Heart left ventricle (tissue), 16 donors: ENCODE measurements at regions of chr20 and their contacts with region 1.

Region 1: GRCh38 chr20:47620808-47621805 is 119.4 kb downstream of the NCOA3 start:
- DNase-seq: no peak
- ATAC-seq: peak in 2 of 4 donors; percentile 53 to 60
- H3K4me3 ChIP-seq: no peak overlapping the region
- H3K27ac ChIP-seq: peak overlapping the region in 5 of 12 donors; percentile 3 to 18 (median 8)
- H3K4me1 ChIP-seq: peaks cover 0 to 24% (median 11%) of the 10 kb centered on the region in 12 donors
- H3K27me3 ChIP-seq: no peaks in the 10 kb centered on the region
- CTCF ChIP-seq: peak; percentile 74 to 96 (median 87)
- POLR2A ChIP-seq: no peak

Region 2: DNA sequence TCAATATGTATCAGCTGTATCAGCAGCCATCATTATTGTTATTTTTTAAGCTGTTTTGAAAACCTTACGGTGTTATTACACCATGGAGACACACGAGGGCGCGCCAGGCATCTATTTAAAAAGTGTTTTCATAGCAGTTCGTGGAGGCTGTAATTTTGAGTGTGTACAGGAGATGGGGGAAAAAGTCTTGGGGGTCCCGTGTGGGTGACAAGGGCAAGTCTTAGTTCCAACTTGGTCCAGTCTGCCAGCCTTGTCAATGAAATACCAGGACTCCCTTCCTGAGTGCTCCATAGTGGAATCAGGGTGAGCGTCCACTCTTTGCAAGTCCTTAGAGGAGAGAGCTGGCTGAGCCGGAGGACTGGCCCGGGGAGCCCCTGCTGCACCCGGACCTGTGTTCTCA is 868.4 kb before region 1 on chr20:
- intact Hi-C with region 1: loop called in 6 of 10 experiments (anchors 5 to 10 kb)
- DNase-seq: peak in 3 of 5 donors; percentile 17 to 44 (median 34)
- ATAC-seq: peak in 1 of 4 donors; percentile 45
- H3K4me3 ChIP-seq: peak overlapping the region in 2 of 12 donors; percentile 18 to 20
- H3K27ac ChIP-seq: no peak overlapping the region
- H3K4me1 ChIP-seq: peaks cover 0 to 4% (median 0%) of the 10 kb centered on the region in 12 donors
- H3K27me3 ChIP-seq: peaks cover 0 to 10% (median 0%) of the 10 kb centered on the region in 9 donors
- CTCF ChIP-seq: peak; percentile 59 to 83 (median 71)
- POLR2A ChIP-seq: no peak

Region 3: DNA sequence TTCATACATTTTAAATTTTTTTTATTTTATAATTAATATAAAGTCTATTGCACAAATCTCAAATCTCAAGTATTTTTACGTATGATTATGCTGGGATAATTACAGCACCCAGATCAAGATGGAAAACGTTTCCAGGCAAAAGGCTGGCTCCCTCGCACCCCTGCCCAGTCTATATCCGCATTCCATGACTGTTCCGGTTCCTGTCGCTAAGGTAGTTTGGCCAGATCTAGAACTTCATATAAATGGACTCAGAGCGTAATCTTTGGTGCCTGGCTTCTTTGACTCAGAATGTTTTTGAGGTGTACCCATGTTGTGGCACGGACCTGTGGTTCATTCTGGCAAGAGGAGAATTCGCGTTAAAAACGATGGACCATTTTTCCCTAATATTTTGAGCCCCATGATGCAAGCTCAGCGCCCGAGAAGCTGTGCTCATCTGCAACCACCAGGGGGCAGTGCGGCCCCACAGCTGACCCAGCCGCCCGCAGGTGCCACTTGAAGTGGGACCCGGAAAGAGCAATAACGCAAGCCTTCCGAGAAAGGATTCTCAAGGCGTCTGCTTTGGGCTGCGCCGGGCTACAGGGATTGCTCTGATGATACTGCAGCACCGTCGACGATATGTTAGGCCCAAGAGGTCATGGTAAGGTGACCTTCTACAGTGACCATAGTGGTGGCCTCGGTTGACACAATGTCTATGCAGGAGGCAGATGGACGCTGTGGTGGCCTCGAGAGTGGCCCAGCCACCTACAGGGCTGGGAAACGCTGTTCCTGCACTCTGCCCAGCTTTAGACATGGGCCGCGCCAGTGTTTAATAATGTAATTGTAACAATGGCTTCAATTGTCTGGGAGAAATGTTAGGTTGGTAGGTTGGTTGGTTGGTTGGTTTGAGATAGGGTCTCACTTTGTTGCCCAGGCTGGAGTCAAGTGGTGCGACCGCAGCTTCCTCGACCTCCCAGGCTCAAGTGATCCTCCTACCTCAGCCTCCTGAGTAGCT is 424.7 kb before region 1 on chr20:
- intact Hi-C with region 1: loop called in 7 of 10 experiments (anchors 1 to 5 kb)
- DNase-seq: peak; percentile 60 to 84 (median 66)
- ATAC-seq: peak; percentile 45 to 86 (median 83)
- H3K4me3 ChIP-seq: peak overlapping the region in 1 of 12 donors; percentile 5
- H3K27ac ChIP-seq: peak overlapping the region in 1 of 12 donors; percentile 17
- H3K4me1 ChIP-seq: peaks cover 0 to 19% (median 7%) of the 10 kb centered on the region in 12 donors
- H3K27me3 ChIP-seq: no peaks in the 10 kb centered on the region
- CTCF ChIP-seq: peak; percentile 91 to 98 (median 95)
- POLR2A ChIP-seq: no peak

Region 4: GRCh38 chr20:47379433-47380150 is 241.5 kb before region 1 on chr20:
- intact Hi-C with region 1: loop called in 9 of 10 experiments (anchors 2 to 5 kb)
- DNase-seq: no peak
- ATAC-seq: no peak
- H3K4me3 ChIP-seq: no peak overlapping the region
- H3K27ac ChIP-seq: no peak overlapping the region
- H3K4me1 ChIP-seq: peaks cover 0 to 20% (median 11%) of the 10 kb centered on the region in 12 donors
- H3K27me3 ChIP-seq: no peaks in the 10 kb centered on the region
- CTCF ChIP-seq: no peak
- POLR2A ChIP-seq: no peak

Region 5: DNA sequence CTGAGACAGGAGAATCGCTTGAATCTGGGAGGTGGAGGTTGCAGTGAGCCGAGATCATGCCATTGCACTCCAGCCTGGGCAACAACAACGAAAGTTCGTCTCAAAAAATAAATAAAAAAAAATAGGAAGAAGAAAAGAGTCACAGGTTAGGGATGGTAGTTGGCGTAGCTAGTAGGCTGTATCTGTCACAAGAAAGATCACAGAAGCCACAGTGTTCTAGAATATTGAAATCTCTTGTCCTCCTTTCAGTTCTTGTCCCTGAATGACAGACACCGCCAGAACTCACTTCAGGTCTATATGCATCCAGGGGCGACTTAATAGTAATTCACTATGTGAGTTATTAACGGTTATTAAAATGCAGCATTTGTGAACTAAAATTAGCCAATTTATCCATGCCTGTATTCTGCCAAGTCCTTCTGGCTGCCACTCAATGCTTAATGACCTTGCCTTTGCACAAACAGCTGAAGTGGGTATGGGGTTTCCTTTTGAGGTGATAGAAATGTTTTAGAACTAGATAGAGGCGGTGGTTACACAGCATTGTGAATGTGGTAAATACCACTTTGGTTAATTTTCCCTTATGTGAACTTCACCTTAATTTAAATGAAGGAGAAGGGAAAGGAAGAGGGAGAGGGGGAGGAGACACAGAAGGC is 223.3 kb before region 1 on chr20:
- intact Hi-C with region 1: loop called in 2 of 10 experiments (anchors 5 kb)
- DNase-seq: no peak
- ATAC-seq: peak in 3 of 4 donors; percentile 46 to 56 (median 55)
- H3K4me3 ChIP-seq: no peak overlapping the region
- H3K27ac ChIP-seq: peak overlapping the region in 3 of 12 donors; percentile 18 to 31 (median 24)
- H3K4me1 ChIP-seq: peaks cover 0 to 13% (median 2%) of the 10 kb centered on the region in 12 donors
- H3K27me3 ChIP-seq: no peaks in the 10 kb centered on the region
- CTCF ChIP-seq: no peak
- POLR2A ChIP-seq: no peak

Region 6: GRCh38 chr20:48431653-48432516 is 810.8 kb after region 1 on chr20:
- intact Hi-C with region 1: no loop called
- DNase-seq: peak in 1 of 5 donors; percentile 28
- ATAC-seq: no peak
- H3K4me3 ChIP-seq: no peak overlapping the region
- H3K27ac ChIP-seq: no peak overlapping the region
- H3K4me1 ChIP-seq: peaks cover 0 to 10% (median 0%) of the 10 kb centered on the region in 12 donors
- H3K27me3 ChIP-seq: no peaks in the 10 kb centered on the region
- CTCF ChIP-seq: no peak
- POLR2A ChIP-seq: no peak